ENCODE measurements at regions of chr15 and their contacts with region 1.

Region 1: GRCh38 chr15:84588053-84588874 is 12.5 kb upstream of the ZSCAN2 start:
- DNase-seq: peak; percentile 95
- H3K4me3 Mint-ChIP-seq: peak overlapping the region; percentile 75
- H3K27ac Mint-ChIP-seq: no peak overlapping the region
- H3K4me1 Mint-ChIP-seq: peaks cover 3% of the 10 kb centered on the region
- H3K27me3 Mint-ChIP-seq: peaks cover 19% of the 10 kb centered on the region

Region 2: GRCh38 chr15:84570164-84570735 is 18.0 kb before region 1 on chr15:
- intact Hi-C with region 1: no loop called
- DNase-seq: peak; percentile 90
- H3K4me3 Mint-ChIP-seq: peak overlapping the region; percentile 82
- H3K27ac Mint-ChIP-seq: peak overlapping the region; percentile 93
- H3K4me1 Mint-ChIP-seq: peaks cover 13% of the 10 kb centered on the region
- H3K27me3 Mint-ChIP-seq: no peaks in the 10 kb centered on the region

Region 3: GRCh38 chr15:84600851-84601838 is 12.9 kb after region 1 on chr15 and contains the start of gene ZSCAN2:
- intact Hi-C with region 1: no loop called
- DNase-seq: peak; percentile 98
- H3K4me3 Mint-ChIP-seq: peak within 1 kb of the TSS; percentile 96
- H3K27ac Mint-ChIP-seq: peak within 1 kb of the TSS; percentile 83
- H3K4me1 Mint-ChIP-seq: peaks cover 50% of the 10 kb centered on the region
- H3K27me3 Mint-ChIP-seq: no peaks in the 10 kb centered on the region
- total RNA-seq, gene ZSCAN2: 6.8 TPM in 2 replicates

Region 4: DNA sequence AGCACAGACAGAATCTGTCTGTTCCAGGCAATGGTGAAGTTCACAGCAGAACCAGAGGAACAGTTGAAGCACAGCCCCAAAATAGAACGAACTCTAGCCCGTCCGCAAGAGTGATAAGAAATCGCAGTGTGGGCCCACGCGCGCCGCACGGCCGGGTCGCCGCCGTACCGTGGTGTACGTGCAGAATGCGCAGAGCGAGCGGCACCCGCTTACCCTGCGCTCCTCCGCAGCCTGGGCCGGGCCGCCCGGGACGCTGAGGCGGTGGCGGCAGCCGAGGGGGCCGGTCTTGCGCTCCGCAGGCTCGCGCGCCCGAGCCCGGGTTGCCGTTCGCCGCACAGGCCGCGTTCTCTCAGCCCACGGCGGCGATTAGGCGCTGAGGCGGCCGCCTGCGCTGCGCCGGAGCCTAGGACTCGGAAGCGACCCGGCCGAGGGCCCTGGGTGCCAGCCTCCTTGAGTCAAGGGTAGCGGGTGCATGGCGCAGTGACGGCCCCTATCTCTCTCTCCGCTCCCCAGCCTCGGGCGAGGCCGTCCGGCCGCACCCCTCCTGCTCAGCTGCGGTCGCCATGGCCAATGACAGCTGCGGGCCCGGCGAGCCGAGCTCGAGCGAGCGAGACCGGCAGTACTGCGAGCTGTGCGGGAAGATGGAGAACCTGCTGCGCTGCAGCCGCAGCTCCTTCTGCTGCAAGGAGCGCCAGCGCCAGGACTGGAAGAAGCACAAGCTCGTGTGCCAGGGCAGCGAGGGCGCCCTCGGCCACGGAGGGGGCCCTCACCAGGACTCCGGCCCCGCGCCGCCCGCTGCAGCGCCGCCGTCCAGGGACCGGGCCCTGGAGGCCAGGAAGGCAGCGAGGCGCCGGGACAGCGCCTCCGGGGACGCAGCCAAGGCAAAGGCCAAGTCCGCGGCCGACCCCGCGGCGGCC is 45.3 kb after region 1 on chr15:
- intact Hi-C with region 1: loop called (anchors 2 kb)
- DNase-seq: peak; percentile 91
- H3K4me3 Mint-ChIP-seq: peak overlapping the region; percentile 97
- H3K27ac Mint-ChIP-seq: peak overlapping the region; percentile 95
- H3K4me1 Mint-ChIP-seq: peaks cover 33% of the 10 kb centered on the region
- H3K27me3 Mint-ChIP-seq: no peaks in the 10 kb centered on the region

Region 5: DNA sequence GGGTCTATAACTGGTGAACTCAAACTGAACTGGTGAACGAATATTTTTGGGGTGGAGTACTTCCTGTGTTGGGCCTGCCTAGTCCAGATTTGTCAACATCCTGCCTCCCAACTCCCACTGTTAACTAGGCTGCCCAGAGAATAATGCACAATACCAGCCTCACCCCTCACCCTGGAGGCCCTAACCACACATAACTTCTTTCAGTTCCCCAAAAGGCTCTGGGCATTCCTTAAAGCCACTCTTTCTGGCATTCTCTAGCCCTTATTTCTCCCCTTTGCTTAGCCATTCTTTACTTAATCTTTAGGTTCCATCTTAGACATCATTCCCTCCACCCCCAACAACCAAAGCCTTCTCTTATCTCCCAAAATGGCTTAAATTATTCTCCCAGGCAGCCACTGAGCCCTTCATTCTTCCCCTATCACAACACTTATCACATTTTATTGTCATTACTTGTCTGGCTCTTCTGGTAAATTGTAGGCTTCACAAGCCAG is 136.8 kb after region 1 on chr15:
- intact Hi-C with region 1: no loop called
- DNase-seq: peak; percentile 80
- H3K4me3 Mint-ChIP-seq: peak overlapping the region; percentile 69
- H3K27ac Mint-ChIP-seq: peak overlapping the region; percentile 95
- H3K4me1 Mint-ChIP-seq: peaks cover 28% of the 10 kb centered on the region
- H3K27me3 Mint-ChIP-seq: no peaks in the 10 kb centered on the region

Region 6: DNA sequence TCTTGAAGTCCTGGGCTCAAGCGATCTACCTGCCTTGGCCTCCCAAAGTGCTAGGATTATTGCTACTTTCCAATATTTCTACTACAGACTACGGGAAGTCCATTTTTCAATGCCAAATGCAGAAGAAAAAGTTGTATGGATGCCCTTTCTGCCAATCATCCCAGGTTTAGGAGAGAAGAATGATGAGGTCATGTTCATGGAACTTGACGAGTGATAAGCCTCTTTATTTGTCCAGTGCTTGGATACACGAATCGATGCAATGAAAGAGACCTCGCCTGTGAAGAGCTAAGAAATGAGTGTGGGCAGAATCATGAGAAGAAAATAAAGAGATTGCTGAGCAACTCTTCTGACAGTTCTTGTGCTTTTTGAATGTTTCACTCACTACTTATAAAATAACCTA is 295.2 kb after region 1 on chr15:
- intact Hi-C with region 1: loop called (anchors 1 kb)
- DNase-seq: no peak
- H3K4me3 Mint-ChIP-seq: no peak overlapping the region
- H3K27ac Mint-ChIP-seq: no peak overlapping the region
- H3K4me1 Mint-ChIP-seq: no peaks in the 10 kb centered on the region
- H3K27me3 Mint-ChIP-seq: peaks cover 5% of the 10 kb centered on the region

Region 7: DNA sequence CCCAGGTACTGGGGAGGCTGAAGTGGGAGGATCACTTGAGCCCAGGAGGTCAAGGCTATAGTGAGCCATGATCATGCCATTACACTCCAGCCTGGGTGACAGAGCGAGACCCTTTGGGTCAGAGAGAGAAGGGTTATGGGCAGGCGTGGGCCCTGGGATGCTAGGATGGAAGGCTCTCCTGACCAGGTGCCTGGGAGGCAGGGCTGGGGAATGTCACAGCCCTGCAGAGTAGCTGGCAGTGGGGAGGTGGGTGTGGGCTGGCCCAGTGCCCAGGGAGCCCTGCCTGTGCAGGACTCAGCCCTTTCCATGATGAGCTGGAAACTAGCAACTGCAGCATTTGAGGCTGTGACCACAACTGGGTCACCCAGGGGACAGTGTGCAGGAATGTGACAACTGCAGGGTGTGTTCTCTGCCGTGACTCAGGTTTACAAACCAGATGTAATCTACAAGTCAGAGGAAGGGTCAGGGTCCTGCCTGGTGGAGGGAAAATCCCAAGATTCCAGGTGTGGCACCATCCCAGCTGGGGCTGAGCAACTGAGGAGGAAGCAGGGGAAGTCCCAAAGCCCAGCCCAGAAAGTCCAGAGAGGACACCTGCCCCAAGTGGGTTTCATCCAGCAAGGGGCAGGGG is 341.6 kb after region 1 on chr15:
- intact Hi-C with region 1: loop called (anchors 1 kb)
- DNase-seq: no peak
- H3K4me3 Mint-ChIP-seq: no peak overlapping the region
- H3K27ac Mint-ChIP-seq: no peak overlapping the region
- H3K4me1 Mint-ChIP-seq: peaks cover 5% of the 10 kb centered on the region
- H3K27me3 Mint-ChIP-seq: peaks cover 3% of the 10 kb centered on the region

Region 8: GRCh38 chr15:85044251-85044853 is 456.1 kb after region 1 on chr15:
- intact Hi-C with region 1: loop called (anchors 1 kb)
- DNase-seq: peak; percentile 80
- H3K4me3 Mint-ChIP-seq: no peak overlapping the region
- H3K27ac Mint-ChIP-seq: no peak overlapping the region
- H3K4me1 Mint-ChIP-seq: peaks cover 8% of the 10 kb centered on the region
- H3K27me3 Mint-ChIP-seq: no peaks in the 10 kb centered on the region

Measured in activated CD4-positive, alpha-beta T cell treated with anti-CD3 and anti-CD28 coated beads, Interleukin-2, amount 10 ng/mL, durations not matched to agents 24 days and 14 days (primary cell).